ENCODE measurements at regions of chr18 and their contacts with region 1.

Region 1: GRCh38 chr18:47748847-47749599 is 181.4 kb downstream of the SMAD2 start:
- DNase-seq: peak; percentile 95
- H3K4me3 ChIP-seq: peak overlapping the region; percentile 42 to 72
- H3K27ac ChIP-seq: no peak overlapping the region
- H3K4me1 ChIP-seq: peaks cover 0 to 4% of the 10 kb centered on the region in 2 experiments; a peak in 1 of 4 replicates
- H3K27me3 ChIP-seq: no peaks in the 10 kb centered on the region
- CTCF ChIP-seq: peak; percentile 94
- EP300 ChIP-seq: no peak
- RAD21 ChIP-seq: peak; percentile 95

Region 2: GRCh38 chr18:47108373-47108772 is 640.6 kb before region 1 on chr18:
- CTCF ChIA-PET with region 1: interaction called, 10 read pairs
- POLR2A ChIA-PET with region 1: no interaction called
- DNase-seq: no peak
- H3K4me3 ChIP-seq: no peak overlapping the region
- H3K27ac ChIP-seq: no peak overlapping the region
- H3K4me1 ChIP-seq: peaks cover 0 to 10% of the 10 kb centered on the region in 2 experiments; a peak in 1 of 4 replicates
- H3K27me3 ChIP-seq: no peaks in the 10 kb centered on the region
- CTCF ChIP-seq: no peak
- EP300 ChIP-seq: no peak
- RAD21 ChIP-seq: no peak

Region 3: DNA sequence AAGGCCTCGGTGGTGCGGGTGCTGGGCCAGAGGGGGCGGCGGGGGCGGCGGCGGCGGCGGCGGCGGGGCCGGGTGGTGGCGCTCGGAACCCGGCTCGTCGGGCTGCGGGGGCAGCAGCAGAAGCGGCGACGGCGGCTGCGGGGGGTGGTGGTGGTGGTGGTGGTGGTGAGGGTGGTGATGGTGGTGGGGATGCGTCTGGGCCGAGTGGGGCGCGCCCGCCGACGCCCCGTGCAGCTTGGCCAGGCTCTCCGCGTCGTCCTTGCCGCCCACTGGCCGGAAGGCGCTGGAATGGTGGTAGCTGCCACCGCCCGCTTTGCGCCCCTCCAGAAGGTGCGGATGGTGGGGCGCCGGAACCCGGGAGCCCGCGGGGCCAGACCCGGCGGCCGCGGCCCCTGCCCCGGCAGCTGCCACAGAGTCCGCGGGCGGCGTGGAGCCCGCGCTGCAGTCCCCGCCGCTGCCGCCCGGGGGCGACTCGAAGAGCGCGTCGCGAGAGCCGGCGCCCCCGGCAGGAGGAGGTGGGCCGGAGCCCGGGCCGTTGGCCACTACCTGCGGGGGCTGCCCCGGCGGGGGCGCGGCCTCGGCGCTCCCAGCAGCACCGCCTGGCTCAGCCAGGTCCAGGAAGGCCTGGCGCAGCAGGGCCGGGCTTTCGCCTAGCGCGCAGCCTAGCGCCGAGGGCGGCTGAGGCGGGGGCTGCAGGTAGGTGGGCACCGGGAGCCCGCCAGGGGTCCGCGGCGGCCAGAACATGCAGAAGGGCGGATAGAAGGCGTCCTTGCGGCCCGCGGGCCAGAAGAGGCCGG is 501.8 kb before region 1 on chr18:
- CTCF ChIA-PET with region 1: interaction called, 41 read pairs
- POLR2A ChIA-PET with region 1: no interaction called
- DNase-seq: peak; percentile 90
- H3K4me3 ChIP-seq: peak overlapping the region in 1 of 2 experiments; percentile 9; a peak in 1 of 4 replicates
- H3K27ac ChIP-seq: no peak overlapping the region
- H3K4me1 ChIP-seq: peaks cover 0 to 7% of the 10 kb centered on the region in 2 experiments; a peak in 1 of 4 replicates
- H3K27me3 ChIP-seq: peaks cover 51% of the 10 kb centered on the region
- CTCF ChIP-seq: peak; percentile 41
- EP300 ChIP-seq: no peak
- RAD21 ChIP-seq: peak; percentile 32

Region 4: GRCh38 chr18:47254341-47254939 is 494.6 kb before region 1 on chr18:
- CTCF ChIA-PET with region 1: interaction called, 41 read pairs
- POLR2A ChIA-PET with region 1: no interaction called
- DNase-seq: no peak
- H3K4me3 ChIP-seq: no peak overlapping the region
- H3K27ac ChIP-seq: no peak overlapping the region
- H3K4me1 ChIP-seq: peaks cover 0 to 7% of the 10 kb centered on the region in 2 experiments; a peak in 1 of 4 replicates
- H3K27me3 ChIP-seq: peaks cover 45% of the 10 kb centered on the region
- CTCF ChIP-seq: no peak
- EP300 ChIP-seq: no peak
- RAD21 ChIP-seq: no peak

Region 5: DNA sequence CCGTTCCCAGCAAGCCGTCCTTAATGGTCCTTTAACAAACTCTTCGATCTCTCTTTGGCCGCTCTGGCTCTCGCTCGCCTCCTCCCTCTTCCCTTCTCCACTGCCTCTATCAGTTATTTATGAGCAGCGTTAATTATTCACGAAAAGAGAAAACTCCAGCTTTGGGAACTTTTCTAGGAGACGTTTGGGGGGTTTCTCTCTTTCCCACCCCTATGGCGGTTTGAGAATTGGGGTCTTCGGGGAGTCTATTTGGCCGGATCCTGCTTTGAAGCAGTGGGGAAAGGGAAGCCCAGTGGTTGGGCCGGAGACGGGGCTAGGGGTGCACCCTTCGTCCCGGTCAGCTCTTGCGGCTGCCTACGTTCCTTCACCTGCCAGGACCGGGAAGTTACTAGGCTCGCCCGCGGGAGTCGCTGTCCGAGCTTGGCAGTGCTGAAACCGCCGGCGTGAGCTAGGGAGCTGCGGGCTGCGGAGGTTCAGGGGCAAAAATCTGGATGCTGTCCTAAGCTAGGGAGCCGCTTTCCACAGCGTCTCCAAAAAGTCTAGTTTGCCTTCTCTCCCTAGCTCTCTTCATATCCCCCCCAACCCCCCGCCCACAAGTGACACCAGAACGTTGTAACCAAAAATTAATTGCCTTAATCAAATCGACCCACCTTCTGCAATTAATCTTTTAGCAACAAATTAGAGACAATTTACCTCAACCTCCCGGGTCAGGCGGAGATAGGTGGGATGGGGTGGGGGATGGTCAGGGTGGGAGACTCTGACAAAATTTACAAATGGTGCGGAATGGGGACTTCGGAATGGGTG is 488.7 kb before region 1 on chr18:
- CTCF ChIA-PET with region 1: interaction called, 38 read pairs
- POLR2A ChIA-PET with region 1: no interaction called
- DNase-seq: peak; percentile 78
- H3K4me3 ChIP-seq: no peak overlapping the region
- H3K27ac ChIP-seq: no peak overlapping the region
- H3K4me1 ChIP-seq: peaks cover 0 to 8% of the 10 kb centered on the region in 2 experiments; a peak in 1 of 4 replicates
- H3K27me3 ChIP-seq: peaks cover 30% of the 10 kb centered on the region; the same call in 1 of the 2 replicates
- CTCF ChIP-seq: no peak
- EP300 ChIP-seq: no peak
- RAD21 ChIP-seq: peak; percentile 12; the same call in 1 of the 2 replicates

Region 6: GRCh38 chr18:47737956-47738355 is 11.1 kb before region 1 on chr18:
- CTCF ChIA-PET with region 1: interaction called, 34 read pairs
- POLR2A ChIA-PET with region 1: no interaction called
- DNase-seq: no peak
- H3K4me3 ChIP-seq: no peak overlapping the region
- H3K27ac ChIP-seq: no peak overlapping the region
- H3K4me1 ChIP-seq: no peaks in the 10 kb centered on the region
- H3K27me3 ChIP-seq: no peaks in the 10 kb centered on the region
- CTCF ChIP-seq: no peak
- EP300 ChIP-seq: no peak
- RAD21 ChIP-seq: no peak

Measured in SK-N-SH (cell line).